HepG2 (cell line): ENCODE measurements at regions of chr1 and their contacts with region 1.

Region 1: DNA sequence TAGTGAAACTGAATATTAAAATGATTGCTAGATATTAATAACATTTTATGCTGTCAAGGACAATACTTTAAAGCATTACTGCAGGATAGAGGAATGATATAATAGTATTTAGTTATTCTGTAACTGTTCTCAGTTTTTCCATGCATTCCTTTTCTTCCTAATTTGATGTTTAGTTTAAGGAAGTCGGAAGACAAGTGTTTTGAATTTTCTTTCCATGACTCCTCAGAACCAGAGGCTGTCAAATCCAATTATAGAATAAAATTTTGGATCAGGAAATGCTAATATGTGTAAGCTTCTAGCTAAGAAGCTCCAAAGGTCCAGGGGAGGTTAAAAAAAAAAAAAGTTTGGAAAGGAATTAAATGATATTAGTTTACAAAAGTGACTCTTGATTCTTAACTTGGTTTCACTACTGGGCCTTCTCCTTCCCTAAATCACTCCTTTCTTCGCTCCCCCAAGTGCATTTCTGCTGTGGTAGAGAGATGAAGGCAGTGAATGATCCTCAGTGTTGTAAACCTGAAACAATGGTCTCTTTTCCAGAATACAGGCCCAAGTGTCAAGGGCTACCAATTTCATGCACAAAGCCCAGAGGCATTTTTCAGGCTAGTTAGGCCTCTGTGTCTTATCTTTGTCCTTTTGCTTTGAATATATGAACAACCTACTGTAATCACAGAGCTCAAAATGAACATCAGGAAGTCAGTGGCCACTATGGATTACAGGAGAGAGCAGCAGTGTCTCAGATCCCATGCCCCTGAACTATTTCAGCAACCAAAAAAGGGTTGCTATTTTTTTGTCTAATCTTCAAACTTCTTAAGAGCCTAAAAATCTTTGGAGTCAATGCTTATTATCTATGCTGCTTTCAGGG is 6.2 kb downstream of the ADSS2 start:
- DNase-seq: no peak
- ATAC-seq: no peak
- H3K4me3 ChIP-seq: no peak overlapping the region
- H3K27ac ChIP-seq: no peak overlapping the region
- H3K4me1 ChIP-seq: peaks cover 63% of the 10 kb centered on the region
- H3K27me3 ChIP-seq: no peaks in the 10 kb centered on the region; a peak in 1 of 5 replicates
- CTCF ChIP-seq: no peak
- EP300 ChIP-seq: no peak
- POLR2A ChIP-seq: no peak
- RAD21 ChIP-seq: no peak

Region 2: GRCh38 chr1:243255791-243256512 is 1189.6 kb before region 1 on chr1 and contains the start of gene SDCCAG8:
- CTCF ChIA-PET with region 1: no interaction called
- POLR2A ChIA-PET with region 1: no interaction called
- in situ Hi-C with region 1: no loop called
- intact Hi-C with region 1: loop called (anchors 5 kb)
- DNase-seq: peak; percentile 99
- ATAC-seq: peak; percentile 91
- H3K4me3 ChIP-seq: peak within 1 kb of the TSS; percentile 88 to 99 (median 93)
- H3K27ac ChIP-seq: peak within 1 kb of the TSS; percentile 87
- H3K4me1 ChIP-seq: peaks cover 34% of the 10 kb centered on the region
- H3K27me3 ChIP-seq: no peaks in the 10 kb centered on the region; a peak in 1 of 5 replicates
- CTCF ChIP-seq: no peak
- EP300 ChIP-seq: no peak
- POLR2A ChIP-seq: peak; percentile 87
- RAD21 ChIP-seq: 0 out of 2 replicates have a peak, but pooled peaks have one; percentile 19
- total RNA-seq, gene SDCCAG8: 9.5 and 10.1 TPM in 2 replicates

Region 3: GRCh38 chr1:244614113-244614836 is 168.7 kb after region 1 on chr1:
- CTCF ChIA-PET with region 1: no interaction called
- POLR2A ChIA-PET with region 1: no interaction called
- in situ Hi-C with region 1: no loop called
- intact Hi-C with region 1: no loop called
- DNase-seq: no peak
- ATAC-seq: no peak
- H3K4me3 ChIP-seq: no peak overlapping the region
- H3K27ac ChIP-seq: no peak overlapping the region
- H3K4me1 ChIP-seq: no peaks in the 10 kb centered on the region
- H3K27me3 ChIP-seq: peaks cover 0 to 7% of the 10 kb centered on the region in 2 experiments; a peak in 1 of 5 replicates
- CTCF ChIP-seq: no peak
- EP300 ChIP-seq: no peak
- POLR2A ChIP-seq: no peak
- RAD21 ChIP-seq: no peak